Activated CD4-positive, alpha-beta memory T cell treated with anti-CD3 and anti-CD28 coated beads for 36 hours (primary cell): ENCODE measurements at regions of chr1 and their contacts with region 1.

Region 1: GRCh38 chr1:35451125-35451528 is 106.1 kb downstream of the KIAA0319L start:
- DNase-seq: peak; percentile 85
- H3K4me3 Mint-ChIP-seq: no peak overlapping the region
- H3K27ac Mint-ChIP-seq: no peak overlapping the region
- H3K4me1 Mint-ChIP-seq: peaks cover 50% of the 10 kb centered on the region
- H3K27me3 Mint-ChIP-seq: no peaks in the 10 kb centered on the region

Region 2: GRCh38 chr1:35062518-35063196 is 388.5 kb before region 1 on chr1:
- CTCF ChIA-PET with region 1: no interaction called
- POLR2A ChIA-PET with region 1: no interaction called
- intact Hi-C with region 1: no loop called
- DNase-seq: no peak
- H3K4me3 Mint-ChIP-seq: no peak overlapping the region
- H3K27ac Mint-ChIP-seq: no peak overlapping the region
- H3K4me1 Mint-ChIP-seq: no peaks in the 10 kb centered on the region
- H3K27me3 Mint-ChIP-seq: peaks cover 17% of the 10 kb centered on the region

Region 3: GRCh38 chr1:35461966-35462651 is 11.0 kb after region 1 on chr1:
- CTCF ChIA-PET with region 1: interaction called, 29 read pairs
- POLR2A ChIA-PET with region 1: no interaction called
- intact Hi-C with region 1: loop called (anchors 1 kb)
- DNase-seq: peak; percentile 53
- H3K4me3 Mint-ChIP-seq: peak overlapping the region; percentile 13
- H3K27ac Mint-ChIP-seq: peak overlapping the region; percentile 85
- H3K4me1 Mint-ChIP-seq: peaks cover 25% of the 10 kb centered on the region
- H3K27me3 Mint-ChIP-seq: no peaks in the 10 kb centered on the region

Region 4: GRCh38 chr1:35532497-35533223 is 81.5 kb after region 1 on chr1:
- CTCF ChIA-PET with region 1: interaction called, 27 read pairs
- POLR2A ChIA-PET with region 1: interaction called, 3 read pairs
- intact Hi-C with region 1: no loop called
- DNase-seq: no peak
- H3K4me3 Mint-ChIP-seq: no peak overlapping the region
- H3K27ac Mint-ChIP-seq: no peak overlapping the region
- H3K4me1 Mint-ChIP-seq: peaks cover 32% of the 10 kb centered on the region
- H3K27me3 Mint-ChIP-seq: no peaks in the 10 kb centered on the region

Region 5: GRCh38 chr1:35557292-35558063 is 106.4 kb after region 1 on chr1 and contains the starts of genes KIAA0319L and NCDN:
- CTCF ChIA-PET with region 1: interaction called, 138 read pairs
- POLR2A ChIA-PET with region 1: interaction called, 21 read pairs
- intact Hi-C with region 1: no loop called
- DNase-seq: peak; percentile 98
- H3K4me3 Mint-ChIP-seq: peak within 1 kb of the TSS; percentile 97
- H3K27ac Mint-ChIP-seq: peak within 1 kb of the TSS; percentile 95
- H3K4me1 Mint-ChIP-seq: peaks cover 58% of the 10 kb centered on the region
- H3K27me3 Mint-ChIP-seq: no peaks in the 10 kb centered on the region
- total RNA-seq, gene KIAA0319L: 28.3 to 30.9 TPM
- total RNA-seq, gene NCDN: 21.6 to 21.7 TPM

Region 6: DNA sequence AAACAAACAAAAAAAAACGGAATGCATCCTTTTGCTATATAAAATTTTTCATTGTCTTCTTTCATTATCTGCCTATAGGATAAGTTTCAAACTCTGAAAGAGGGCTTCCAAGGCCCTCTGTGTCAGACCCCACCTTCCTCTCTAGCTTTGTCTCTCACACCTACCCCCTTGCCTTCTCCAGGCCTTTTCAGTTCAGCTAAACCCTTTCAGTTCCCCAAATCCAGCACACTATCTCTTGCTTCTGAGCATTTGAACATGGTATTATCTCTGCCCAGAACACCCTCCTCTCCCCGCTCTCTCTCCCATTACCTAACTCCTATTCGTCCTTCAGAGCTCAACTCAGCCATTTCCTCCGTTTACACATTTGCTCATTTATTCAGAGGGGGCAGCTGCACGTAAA is 231.9 kb after region 1 on chr1:
- CTCF ChIA-PET with region 1: no interaction called
- POLR2A ChIA-PET with region 1: no interaction called
- intact Hi-C with region 1: no loop called
- DNase-seq: no peak
- H3K4me3 Mint-ChIP-seq: no peak overlapping the region
- H3K27ac Mint-ChIP-seq: no peak overlapping the region
- H3K4me1 Mint-ChIP-seq: no peaks in the 10 kb centered on the region
- H3K27me3 Mint-ChIP-seq: peaks cover 5% of the 10 kb centered on the region

Region 7: GRCh38 chr1:35715568-35716002 is 264.5 kb after region 1 on chr1:
- CTCF ChIA-PET with region 1: interaction called, 31 read pairs
- POLR2A ChIA-PET with region 1: no interaction called
- intact Hi-C with region 1: loop called (anchors 5 kb)
- DNase-seq: peak; percentile 86
- H3K4me3 Mint-ChIP-seq: no peak overlapping the region
- H3K27ac Mint-ChIP-seq: no peak overlapping the region
- H3K4me1 Mint-ChIP-seq: peaks cover 32% of the 10 kb centered on the region
- H3K27me3 Mint-ChIP-seq: no peaks in the 10 kb centered on the region

Region 8: GRCh38 chr1:35777109-35777508 is 326.0 kb after region 1 on chr1:
- CTCF ChIA-PET with region 1: interaction called, 25 read pairs
- POLR2A ChIA-PET with region 1: no interaction called
- intact Hi-C with region 1: loop called (anchors 2 kb)
- DNase-seq: no peak
- H3K4me3 Mint-ChIP-seq: no peak overlapping the region
- H3K27ac Mint-ChIP-seq: no peak overlapping the region
- H3K4me1 Mint-ChIP-seq: peaks cover 5% of the 10 kb centered on the region
- H3K27me3 Mint-ChIP-seq: no peaks in the 10 kb centered on the region

Region 9: GRCh38 chr1:35894183-35894582 is 443.1 kb after region 1 on chr1:
- CTCF ChIA-PET with region 1: no interaction called
- POLR2A ChIA-PET with region 1: no interaction called
- intact Hi-C with region 1: no loop called
- DNase-seq: no peak
- H3K4me3 Mint-ChIP-seq: no peak overlapping the region
- H3K27ac Mint-ChIP-seq: no peak overlapping the region
- H3K4me1 Mint-ChIP-seq: no peaks in the 10 kb centered on the region
- H3K27me3 Mint-ChIP-seq: no peaks in the 10 kb centered on the region

Region 10: DNA sequence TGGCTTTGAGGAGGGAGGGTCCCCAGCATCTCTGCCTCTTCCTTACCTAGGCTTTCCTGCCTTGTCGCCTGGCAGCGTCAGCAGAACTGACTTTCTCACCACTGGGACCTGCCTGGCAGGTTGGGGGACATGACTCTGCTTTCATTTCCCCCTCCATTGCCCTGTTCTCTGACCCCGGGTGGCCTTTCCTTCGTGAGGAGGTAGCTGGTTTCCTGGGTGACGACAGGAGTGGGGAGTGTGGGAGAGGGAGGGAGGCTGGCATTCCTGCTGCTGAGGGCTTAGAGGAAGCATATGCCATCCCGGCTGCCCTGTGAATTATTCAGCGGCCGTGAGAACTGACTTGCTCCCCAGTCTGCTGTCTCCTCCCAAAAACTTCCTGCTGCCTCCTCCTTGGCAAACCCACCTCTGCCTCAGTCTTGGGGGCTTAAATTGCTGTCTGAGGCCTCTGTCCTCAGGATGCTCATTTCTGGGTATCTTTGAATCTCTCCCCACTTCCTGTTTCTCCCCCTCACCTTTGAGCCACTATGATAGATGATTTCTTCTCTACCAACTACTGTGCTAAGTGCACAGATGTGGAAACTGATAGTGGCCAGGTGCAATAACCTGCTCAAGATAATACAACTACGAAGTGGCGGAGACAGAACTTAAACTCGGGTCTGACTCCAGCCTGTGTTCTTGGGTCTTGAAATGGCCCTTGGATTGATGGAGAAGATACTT is 1213.6 kb after region 1 on chr1:
- CTCF ChIA-PET with region 1: no interaction called
- POLR2A ChIA-PET with region 1: no interaction called
- intact Hi-C with region 1: no loop called
- DNase-seq: no peak
- H3K4me3 Mint-ChIP-seq: no peak overlapping the region
- H3K27ac Mint-ChIP-seq: no peak overlapping the region
- H3K4me1 Mint-ChIP-seq: no peaks in the 10 kb centered on the region
- H3K27me3 Mint-ChIP-seq: peaks cover 2% of the 10 kb centered on the region